ENCODE measurements at regions of chr4 and their contacts with region 1.

Region 1: DNA sequence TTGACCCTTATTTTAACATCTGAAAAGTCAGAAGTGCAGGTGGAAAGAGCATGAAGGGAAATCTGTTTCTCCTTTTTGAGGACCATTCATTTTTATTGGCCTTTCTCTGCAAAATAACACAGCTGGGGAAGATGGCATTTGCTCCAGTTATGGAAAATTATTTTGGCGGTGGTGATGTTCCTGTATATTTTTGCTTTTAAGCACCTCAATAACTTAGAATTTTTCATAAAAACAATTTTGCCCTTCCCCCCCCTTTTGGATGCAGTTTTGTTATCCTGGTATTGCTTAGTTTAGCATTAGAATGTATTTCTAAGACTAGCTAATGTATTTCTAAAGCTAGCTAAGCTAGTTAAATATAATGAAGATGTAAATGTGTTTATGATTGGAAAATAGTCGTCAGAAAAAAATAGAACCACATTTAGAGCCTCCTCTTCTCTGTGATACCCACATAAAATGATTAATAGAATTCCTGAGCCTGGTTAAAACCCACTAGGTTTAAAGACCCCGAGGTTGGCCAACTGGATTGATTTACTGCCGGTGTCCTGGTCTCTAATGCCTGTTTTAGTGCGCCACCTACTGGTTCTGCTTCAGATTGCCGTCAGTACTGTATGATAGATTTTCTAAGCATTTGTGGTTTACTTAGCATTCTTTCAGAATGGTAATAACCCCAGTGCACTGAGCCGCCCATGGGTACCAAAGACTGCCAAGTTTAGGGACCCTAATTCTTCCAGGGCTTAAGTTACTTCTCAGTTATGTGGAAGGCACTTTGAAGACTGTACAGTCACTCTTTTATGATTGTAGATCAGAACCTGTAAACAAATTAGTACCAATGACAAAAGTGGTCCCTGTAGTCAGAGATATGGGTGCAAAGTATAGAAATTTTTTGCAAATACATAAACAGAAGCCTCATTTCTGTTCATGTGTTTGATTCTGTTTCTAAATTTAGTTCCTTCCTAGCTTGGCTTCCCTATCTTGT is 11.4 kb downstream of the KLF3 start:
- DNase-seq: peak; percentile 78 to 94
- ATAC-seq: peak; percentile 46 to 66 (median 55)
- H3K4me3 ChIP-seq: no peak overlapping the region
- H3K4me3 Mint-ChIP-seq: peak overlapping the region; percentile 89
- H3K27ac ChIP-seq: peak overlapping the region; percentile 19
- H3K27ac Mint-ChIP-seq: peak overlapping the region; percentile 90 to 99
- H3K4me1 ChIP-seq: peaks cover 63% of the 10 kb centered on the region
- H3K4me1 Mint-ChIP-seq: peaks cover 86 to 87% of the 10 kb centered on the region in 2 donors
- H3K27me3 ChIP-seq: no peaks in the 10 kb centered on the region
- H3K27me3 Mint-ChIP-seq: no peaks in the 10 kb centered on the region
- CTCF ChIP-seq: peak; percentile 91

Region 2: DNA sequence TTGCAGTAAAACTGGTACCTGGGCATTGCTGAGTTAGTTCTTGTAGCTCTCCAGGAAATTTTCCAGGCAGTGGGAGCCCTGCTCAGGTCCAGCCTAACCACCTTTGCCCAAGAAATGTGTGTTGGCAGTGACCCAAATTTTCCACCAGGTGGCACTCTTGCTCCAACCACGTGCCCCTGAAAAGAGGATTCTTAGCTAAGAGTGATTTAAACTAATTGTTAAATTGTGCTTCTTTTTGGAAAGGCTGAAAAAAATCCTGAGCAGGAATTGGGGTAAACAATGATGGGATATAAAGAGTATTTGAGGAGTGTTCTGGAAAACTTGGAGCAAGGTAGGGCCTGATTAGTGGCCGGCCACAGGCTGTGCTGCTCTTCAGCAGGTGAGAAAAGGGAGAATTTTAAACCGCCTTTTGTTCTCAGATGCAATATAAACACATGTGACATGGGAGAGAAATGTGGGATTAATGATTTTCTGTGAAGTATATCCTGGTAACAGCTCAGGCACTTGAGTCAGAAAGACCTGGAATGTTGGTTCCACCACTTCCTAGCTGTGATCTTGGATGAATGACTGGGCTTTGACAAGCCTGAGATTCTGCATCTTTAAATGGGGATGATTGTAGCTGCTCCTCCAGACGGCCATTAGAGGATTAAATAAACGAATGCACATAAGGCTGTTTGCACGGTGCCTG is 495.6 kb before region 1 on chr4:
- intact Hi-C with region 1: loop called (anchors 1 kb)
- DNase-seq: peak; percentile 57 to 86
- ATAC-seq: peak; percentile 72 to 74 (median 73)
- H3K4me3 ChIP-seq: no peak overlapping the region
- H3K4me3 Mint-ChIP-seq: no peak overlapping the region
- H3K27ac ChIP-seq: no peak overlapping the region
- H3K27ac Mint-ChIP-seq: no peak overlapping the region
- H3K4me1 ChIP-seq: peaks cover 31% of the 10 kb centered on the region
- H3K4me1 Mint-ChIP-seq: peaks cover 44 to 48% of the 10 kb centered on the region in 2 donors
- H3K27me3 ChIP-seq: no peaks in the 10 kb centered on the region
- H3K27me3 Mint-ChIP-seq: peaks cover 2 to 7% of the 10 kb centered on the region in 2 donors
- CTCF ChIP-seq: peak; percentile 96

Region 3: DNA sequence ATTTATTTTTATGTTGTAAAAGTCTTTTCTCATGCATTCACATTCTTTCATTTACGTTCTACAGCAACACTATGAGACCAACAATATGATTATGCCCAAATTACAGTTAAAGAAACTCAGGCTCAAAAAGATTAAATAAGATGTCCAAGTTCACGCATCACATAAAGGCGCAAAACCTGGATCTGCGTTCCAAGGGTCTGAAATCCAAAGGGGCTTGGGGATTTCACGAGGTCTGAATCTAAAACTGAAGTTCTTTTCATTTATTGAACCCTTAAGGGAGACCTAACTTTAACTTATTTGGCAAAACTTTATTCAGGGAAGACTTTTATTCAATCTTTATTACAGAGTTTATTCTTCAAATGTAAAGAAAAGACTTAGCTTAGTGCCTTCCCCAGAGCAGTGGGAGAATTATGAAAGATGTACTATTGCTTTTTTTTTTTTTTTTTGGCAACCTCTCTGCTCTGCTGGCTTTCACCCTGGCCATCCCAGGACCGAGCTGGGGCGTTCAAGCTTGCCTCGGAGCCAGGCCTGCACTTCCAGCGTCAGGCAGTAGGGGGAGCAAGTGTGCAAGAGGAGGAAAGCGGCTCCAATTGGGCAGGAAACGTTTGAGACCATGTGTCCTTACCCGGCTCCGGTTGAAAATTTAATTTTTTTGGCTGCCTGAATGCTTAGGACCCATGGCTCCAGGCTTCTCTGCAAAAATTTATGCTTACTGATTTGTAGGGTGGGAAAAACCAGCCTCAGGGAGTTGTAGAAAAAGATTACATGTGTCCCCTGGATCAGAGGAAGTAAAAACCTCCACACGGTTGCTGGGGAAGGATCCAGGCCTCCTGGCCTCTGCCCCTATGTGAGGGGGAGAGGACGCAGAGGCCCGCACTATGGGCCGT is 355.7 kb before region 1 on chr4:
- intact Hi-C with region 1: loop called (anchors 1 kb)
- DNase-seq: peak; percentile 87 to 92
- ATAC-seq: peak; percentile 84 to 90 (median 87)
- H3K4me3 ChIP-seq: peak overlapping the region; percentile 33
- H3K4me3 Mint-ChIP-seq: peak overlapping the region; percentile 88
- H3K27ac ChIP-seq: peak overlapping the region; percentile 84
- H3K27ac Mint-ChIP-seq: peak overlapping the region; percentile 86 to 91
- H3K4me1 ChIP-seq: peaks cover 26% of the 10 kb centered on the region
- H3K4me1 Mint-ChIP-seq: peaks cover 26 to 34% of the 10 kb centered on the region in 2 donors
- H3K27me3 ChIP-seq: no peaks in the 10 kb centered on the region
- H3K27me3 Mint-ChIP-seq: no peaks in the 10 kb centered on the region
- CTCF ChIP-seq: peak; percentile 94

Region 4: DNA sequence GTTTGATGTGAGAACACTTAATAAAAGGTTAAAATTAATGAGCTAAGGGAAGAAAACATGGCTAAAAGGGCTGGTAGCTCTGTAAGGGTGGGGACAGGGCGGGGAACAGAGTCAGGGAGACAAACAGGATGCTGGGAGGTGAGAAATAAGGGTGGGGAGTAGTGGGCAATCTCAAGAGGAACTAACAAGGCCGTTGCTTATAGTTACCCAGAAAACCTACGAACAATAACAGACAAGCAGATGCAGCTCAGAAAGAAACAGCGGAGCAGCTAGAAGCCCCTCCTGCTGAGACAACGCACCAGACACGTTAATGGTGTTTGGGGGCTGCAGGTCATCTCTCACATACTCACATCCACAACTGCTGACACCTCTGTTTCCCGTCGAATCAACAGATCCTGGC is 21.2 kb before region 1 on chr4:
- intact Hi-C with region 1: loop called (anchors 2 kb)
- DNase-seq: peak; percentile 55 to 87
- ATAC-seq: peak; percentile 83 to 94 (median 92)
- H3K4me3 ChIP-seq: no peak overlapping the region
- H3K4me3 Mint-ChIP-seq: peak overlapping the region; percentile 93
- H3K27ac ChIP-seq: peak overlapping the region; percentile 98
- H3K27ac Mint-ChIP-seq: peak overlapping the region; percentile 96 to 97
- H3K4me1 ChIP-seq: peaks cover 24% of the 10 kb centered on the region
- H3K4me1 Mint-ChIP-seq: peaks cover 54% of the 10 kb centered on the region in 2 donors
- H3K27me3 ChIP-seq: no peaks in the 10 kb centered on the region
- H3K27me3 Mint-ChIP-seq: no peaks in the 10 kb centered on the region
- CTCF ChIP-seq: no peak

Region 5: GRCh38 chr4:38730830-38731646 is 55.6 kb after region 1 on chr4:
- intact Hi-C with region 1: loop called (anchors 5 kb)
- DNase-seq: peak; percentile 79 to 89
- ATAC-seq: peak; percentile 65 to 76 (median 75)
- H3K4me3 ChIP-seq: no peak overlapping the region
- H3K4me3 Mint-ChIP-seq: no peak overlapping the region
- H3K27ac ChIP-seq: no peak overlapping the region
- H3K27ac Mint-ChIP-seq: peak overlapping the region in 1 of 2 donors; percentile 61
- H3K4me1 ChIP-seq: peaks cover 22% of the 10 kb centered on the region
- H3K4me1 Mint-ChIP-seq: peaks cover 29 to 45% of the 10 kb centered on the region in 2 donors
- H3K27me3 ChIP-seq: peaks cover 2% of the 10 kb centered on the region
- H3K27me3 Mint-ChIP-seq: peaks cover 3 to 11% of the 10 kb centered on the region in 2 donors
- CTCF ChIP-seq: peak; percentile 98